Heart right ventricle (tissue), 16 donors: ENCODE measurements at regions of chr7 and their contacts with region 1.

Region 1: GRCh38 chr7:68146983-68147382 is 1150.3 kb downstream of the TYW1 start:
- DNase-seq: no peak
- ATAC-seq: no peak
- H3K4me3 ChIP-seq: no peak overlapping the region
- H3K27ac ChIP-seq: no peak overlapping the region
- H3K4me1 ChIP-seq: no peaks in the 10 kb centered on the region
- H3K27me3 ChIP-seq: peaks cover 0 to 56% (median 26%) of the 10 kb centered on the region in 7 donors
- CTCF ChIP-seq: no peak

Region 2: GRCh38 chr7:68088879-68089278 is 58.1 kb before region 1 on chr7:
- intact Hi-C with region 1: no loop called
- DNase-seq: no peak
- ATAC-seq: no peak
- H3K4me3 ChIP-seq: no peak overlapping the region
- H3K27ac ChIP-seq: no peak overlapping the region
- H3K4me1 ChIP-seq: no peaks in the 10 kb centered on the region
- H3K27me3 ChIP-seq: peaks cover 0 to 7% (median 0%) of the 10 kb centered on the region in 7 donors
- CTCF ChIP-seq: no peak

Region 3: DNA sequence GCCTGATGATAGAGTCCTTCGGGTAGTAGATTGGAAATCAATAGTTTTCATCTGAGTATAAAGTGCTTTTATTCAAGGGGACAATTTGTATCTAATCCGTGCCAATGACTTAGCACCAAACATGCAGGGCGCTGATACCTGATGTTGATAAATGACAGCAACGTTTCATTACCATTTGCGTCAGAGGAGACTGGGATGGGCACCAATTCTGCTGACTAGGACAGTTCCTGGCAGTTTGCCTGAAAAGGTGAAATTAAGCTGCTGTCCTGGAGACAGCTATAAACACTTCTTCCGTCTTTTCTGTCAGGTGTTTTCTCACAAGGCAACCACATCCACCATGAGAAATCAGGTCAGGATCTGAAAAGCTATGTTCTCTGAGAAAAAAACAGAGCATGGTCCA is 13.9 kb before region 1 on chr7:
- intact Hi-C with region 1: loop called in 1 of 10 experiments (anchors 1 kb)
- DNase-seq: no peak
- ATAC-seq: no peak
- H3K4me3 ChIP-seq: no peak overlapping the region
- H3K27ac ChIP-seq: no peak overlapping the region
- H3K4me1 ChIP-seq: no peaks in the 10 kb centered on the region
- H3K27me3 ChIP-seq: peaks cover 0 to 44% (median 17%) of the 10 kb centered on the region in 7 donors
- CTCF ChIP-seq: no peak